ENCODE measurements at regions of chr18 and their contacts with region 1.

Region 1: GRCh38 chr18:54224379-54225014 is at the start of gene MBD2:
- DNase-seq: peak; percentile 76
- ATAC-seq: peak; percentile 84
- H3K4me3 ChIP-seq: peak within 1 kb of the TSS; percentile 77
- H3K27ac ChIP-seq: peak within 1 kb of the TSS; percentile 88
- H3K4me1 ChIP-seq: no peaks in the 10 kb centered on the region
- H3K27me3 ChIP-seq: no peaks in the 10 kb centered on the region
- CTCF ChIP-seq: peak; percentile 10 to 39 (median 23); a peak in 1 of 6 replicates
- EP300 ChIP-seq: no peak
- POLR2A ChIP-seq: peak; percentile 72
- RAD21 ChIP-seq: peak; percentile 49; the same call in 1 of the 2 replicates
- polyA plus RNA-seq, gene MBD2: 27.0 to 53.5 TPM

Region 2: DNA sequence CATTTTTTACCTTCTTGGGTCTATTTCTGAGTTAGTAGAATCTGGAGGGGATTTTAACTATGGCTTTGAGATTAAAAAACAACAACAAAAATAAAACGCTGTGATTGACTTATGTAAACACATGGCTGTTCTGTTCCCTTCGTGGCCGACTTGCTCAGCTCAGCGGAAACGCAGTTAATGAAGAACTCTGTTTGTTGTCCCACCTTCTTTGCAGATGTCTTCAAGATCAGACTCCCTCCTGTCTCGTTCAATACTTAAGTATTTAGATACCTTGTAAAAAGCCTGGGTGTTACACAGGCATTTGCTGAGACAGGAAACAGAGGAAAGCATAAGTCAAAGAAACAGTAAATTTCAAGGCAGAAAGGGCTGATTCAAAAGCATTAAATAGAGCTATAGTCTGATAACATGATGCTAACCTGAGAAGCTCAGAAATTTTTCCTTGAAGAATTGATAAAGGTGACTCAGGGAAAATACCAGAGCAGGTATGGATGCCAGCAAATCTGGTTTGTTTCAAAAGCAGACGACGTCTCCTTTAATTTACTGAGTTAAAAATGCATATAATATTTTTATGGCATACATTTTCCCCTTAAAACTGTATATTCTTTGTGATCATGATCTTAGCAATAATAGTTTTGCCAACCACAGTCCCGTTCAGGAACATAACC is 23.1 kb after region 1 on chr18:
- CTCF ChIA-PET with region 1: interaction called, 7 read pairs
- POLR2A ChIA-PET with region 1: interaction called, 4 read pairs
- RAD21 ChIA-PET with region 1: interaction called, 6 read pairs
- SMC1A ChIA-PET with region 1: interaction called, 7 read pairs
- in situ Hi-C with region 1: no loop called
- intact Hi-C with region 1: loop called (anchors 1 kb)
- DNase-seq: no peak
- ATAC-seq: no peak
- H3K4me3 ChIP-seq: no peak overlapping the region
- H3K27ac ChIP-seq: peak overlapping the region; percentile 23
- H3K4me1 ChIP-seq: peaks cover 34% of the 10 kb centered on the region
- H3K27me3 ChIP-seq: no peaks in the 10 kb centered on the region
- CTCF ChIP-seq: no peak
- EP300 ChIP-seq: no peak
- POLR2A ChIP-seq: no peak
- RAD21 ChIP-seq: no peak

Region 3: DNA sequence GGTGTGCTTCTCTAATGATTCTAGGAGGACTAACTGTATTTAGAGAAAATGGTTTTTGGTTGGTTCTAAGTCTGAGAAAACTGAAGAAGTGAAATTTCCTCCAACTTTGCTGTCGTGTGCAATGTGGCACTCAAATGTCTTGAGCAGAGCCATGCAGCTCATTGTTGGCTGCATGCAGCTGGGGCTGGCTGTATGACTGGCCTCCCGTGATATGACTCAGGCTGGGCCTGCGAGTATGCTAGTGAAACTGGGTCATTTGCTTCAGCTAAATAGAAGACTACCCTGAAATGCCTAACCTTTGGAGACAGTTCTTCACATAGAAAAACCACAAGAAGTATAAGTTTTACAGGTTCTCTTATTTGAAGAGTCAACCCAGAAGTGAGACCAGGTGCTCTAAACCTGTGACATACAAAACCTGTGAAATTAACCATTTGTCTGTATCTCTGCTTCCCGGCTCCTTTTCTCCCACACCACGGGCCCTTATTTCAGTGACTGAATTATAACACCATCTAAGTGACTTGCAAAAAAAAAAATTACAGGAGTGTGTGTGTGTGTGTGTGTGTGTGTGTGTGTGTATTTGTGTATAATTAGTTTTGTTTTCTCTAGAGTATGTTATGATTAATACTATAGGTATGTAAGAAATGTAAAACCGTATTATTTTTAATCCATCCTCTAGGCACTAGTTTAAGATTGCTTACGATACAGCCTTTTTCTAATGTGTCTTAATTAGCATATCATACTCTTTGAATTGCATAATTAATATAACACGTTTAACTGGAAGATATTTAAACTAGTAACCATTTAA is 60.7 kb after region 1 on chr18:
- CTCF ChIA-PET with region 1: interaction called, 10 read pairs
- POLR2A ChIA-PET with region 1: interaction called, 4 read pairs
- RAD21 ChIA-PET with region 1: interaction called, 16 read pairs
- SMC1A ChIA-PET with region 1: interaction called, 20 read pairs
- in situ Hi-C with region 1: no loop called
- intact Hi-C with region 1: loop called (anchors 1 kb)
- DNase-seq: peak; percentile 97
- ATAC-seq: peak; percentile 99
- H3K4me3 ChIP-seq: no peak overlapping the region
- H3K27ac ChIP-seq: peak overlapping the region; percentile 73
- H3K4me1 ChIP-seq: peaks cover 28% of the 10 kb centered on the region
- H3K27me3 ChIP-seq: no peaks in the 10 kb centered on the region
- CTCF ChIP-seq: no peak
- EP300 ChIP-seq: peak; percentile 94 to 97
- POLR2A ChIP-seq: peak; percentile 72
- RAD21 ChIP-seq: 0 out of 2 replicates have a peak, but pooled peaks have one; percentile 6

Region 4: DNA sequence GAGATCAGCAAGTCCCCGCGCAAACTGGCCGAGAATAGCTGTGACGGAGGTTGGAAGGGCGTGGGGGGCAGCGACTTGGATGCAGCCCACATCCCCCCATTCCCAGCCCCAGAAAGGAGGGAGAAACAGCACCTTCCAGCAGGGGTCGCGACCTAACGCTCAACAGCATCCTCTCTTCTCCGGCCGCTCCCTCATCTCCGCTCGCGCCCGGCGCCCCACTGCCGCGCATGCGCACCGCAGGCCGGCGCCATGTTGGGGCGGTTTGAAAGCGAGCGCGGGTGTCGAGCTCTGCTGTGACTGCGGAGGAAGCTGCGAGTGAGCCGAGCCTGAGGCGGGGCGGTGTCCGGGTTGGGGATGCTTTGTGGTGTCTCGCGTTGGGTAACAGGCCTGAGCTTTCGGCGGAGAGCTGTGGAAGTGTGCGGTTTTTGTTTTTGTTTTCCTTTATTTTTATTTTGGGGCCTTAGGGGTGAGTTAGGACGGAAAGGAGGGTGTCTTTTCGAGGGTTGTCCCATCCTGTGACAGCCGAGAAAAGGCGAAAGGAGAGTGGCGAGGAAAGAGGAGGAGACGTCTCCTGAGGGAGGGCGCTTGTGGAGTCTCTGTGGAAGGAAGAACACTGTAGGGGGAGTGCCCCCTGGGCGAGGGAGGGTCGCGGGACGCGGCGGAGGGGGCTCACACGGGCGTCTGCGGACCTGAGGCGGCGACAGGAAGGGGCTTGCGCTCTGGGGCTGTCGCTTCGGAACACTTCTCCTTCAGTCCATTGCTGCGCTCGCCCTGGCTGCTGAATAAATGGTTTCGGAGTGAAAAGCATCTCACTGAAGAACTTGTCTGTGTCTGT is 133.4 kb after region 1 on chr18 and contains the starts of genes C18orf54 and STARD6:
- CTCF ChIA-PET with region 1: interaction called, 4 read pairs
- POLR2A ChIA-PET with region 1: no interaction called
- RAD21 ChIA-PET with region 1: interaction called, 9 read pairs
- SMC1A ChIA-PET with region 1: interaction called, 7 read pairs
- in situ Hi-C with region 1: loop called (anchors 10 kb)
- intact Hi-C with region 1: loop called (anchors 1 kb)
- DNase-seq: peak; percentile 76
- ATAC-seq: peak; percentile 96
- H3K4me3 ChIP-seq: peak within 1 kb of the TSS; percentile 89
- H3K27ac ChIP-seq: peak within 1 kb of the TSS; percentile 84
- H3K4me1 ChIP-seq: peaks cover 3% of the 10 kb centered on the region
- H3K27me3 ChIP-seq: no peaks in the 10 kb centered on the region
- CTCF ChIP-seq: peak; percentile 63 to 70 (median 65)
- EP300 ChIP-seq: no peak
- POLR2A ChIP-seq: peak; percentile 96
- RAD21 ChIP-seq: 0 out of 2 replicates have a peak, but pooled peaks have one; percentile 20
- polyA plus RNA-seq, gene C18orf54: 1.2 to 1.5 TPM
- polyA plus RNA-seq, gene STARD6: 0.35 to 0.45 TPM

Region 5: GRCh38 chr18:54420096-54420495 is 195.6 kb after region 1 on chr18:
- CTCF ChIA-PET with region 1: no interaction called
- POLR2A ChIA-PET with region 1: no interaction called
- RAD21 ChIA-PET with region 1: no interaction called
- SMC1A ChIA-PET with region 1: no interaction called
- in situ Hi-C with region 1: no loop called
- intact Hi-C with region 1: no loop called
- DNase-seq: no peak
- ATAC-seq: no peak
- H3K4me3 ChIP-seq: no peak overlapping the region
- H3K27ac ChIP-seq: no peak overlapping the region
- H3K4me1 ChIP-seq: no peaks in the 10 kb centered on the region
- H3K27me3 ChIP-seq: no peaks in the 10 kb centered on the region
- CTCF ChIP-seq: no peak
- EP300 ChIP-seq: no peak
- POLR2A ChIP-seq: no peak
- RAD21 ChIP-seq: no peak

Region 6: GRCh38 chr18:54794823-54795222 is 570.3 kb after region 1 on chr18:
- CTCF ChIA-PET with region 1: no interaction called
- POLR2A ChIA-PET with region 1: no interaction called
- RAD21 ChIA-PET with region 1: no interaction called
- SMC1A ChIA-PET with region 1: no interaction called
- in situ Hi-C with region 1: no loop called
- intact Hi-C with region 1: no loop called
- DNase-seq: no peak
- ATAC-seq: no peak
- H3K4me3 ChIP-seq: no peak overlapping the region
- H3K27ac ChIP-seq: no peak overlapping the region
- H3K4me1 ChIP-seq: no peaks in the 10 kb centered on the region
- H3K27me3 ChIP-seq: no peaks in the 10 kb centered on the region
- CTCF ChIP-seq: no peak
- EP300 ChIP-seq: no peak
- POLR2A ChIP-seq: no peak
- RAD21 ChIP-seq: no peak